ENCODE measurements at regions of chr10 and their contacts with region 1.

Region 1: DNA sequence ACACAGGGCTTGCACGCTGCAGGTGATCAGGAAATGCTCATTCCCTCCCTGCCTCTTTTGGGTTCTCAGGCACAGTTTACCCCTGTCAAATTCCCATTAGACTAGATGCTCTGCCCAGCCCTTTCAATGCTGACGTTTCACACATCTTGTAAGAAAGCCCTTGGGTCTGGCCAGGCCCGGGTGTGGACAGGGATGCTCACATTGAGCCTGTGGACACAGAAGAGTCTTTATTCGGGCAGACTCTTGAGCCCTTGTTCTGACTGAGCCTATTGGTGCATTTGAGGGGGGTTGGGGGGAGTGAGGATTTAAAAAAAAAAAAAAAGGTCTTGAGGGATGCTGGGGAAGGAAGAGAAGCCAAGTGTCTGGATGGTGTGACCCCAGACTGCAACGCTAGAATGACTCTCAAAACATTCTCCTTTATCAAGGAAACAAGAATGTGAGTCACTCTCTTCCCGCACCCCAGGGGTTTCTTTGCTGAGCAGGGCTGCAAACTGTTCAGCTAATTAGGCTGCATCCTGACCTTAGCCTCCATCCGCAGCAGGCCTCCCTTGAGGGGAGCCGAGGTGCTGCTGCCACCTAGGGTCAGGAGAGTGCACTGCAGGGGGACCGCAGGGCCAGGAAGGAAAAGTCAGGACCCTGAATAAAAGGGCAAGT is 53.6 kb upstream of the TMEM72 start:
- DNase-seq: peak in 1 of 2 donors; percentile 63
- ATAC-seq: peak; percentile 75

Region 2: DNA sequence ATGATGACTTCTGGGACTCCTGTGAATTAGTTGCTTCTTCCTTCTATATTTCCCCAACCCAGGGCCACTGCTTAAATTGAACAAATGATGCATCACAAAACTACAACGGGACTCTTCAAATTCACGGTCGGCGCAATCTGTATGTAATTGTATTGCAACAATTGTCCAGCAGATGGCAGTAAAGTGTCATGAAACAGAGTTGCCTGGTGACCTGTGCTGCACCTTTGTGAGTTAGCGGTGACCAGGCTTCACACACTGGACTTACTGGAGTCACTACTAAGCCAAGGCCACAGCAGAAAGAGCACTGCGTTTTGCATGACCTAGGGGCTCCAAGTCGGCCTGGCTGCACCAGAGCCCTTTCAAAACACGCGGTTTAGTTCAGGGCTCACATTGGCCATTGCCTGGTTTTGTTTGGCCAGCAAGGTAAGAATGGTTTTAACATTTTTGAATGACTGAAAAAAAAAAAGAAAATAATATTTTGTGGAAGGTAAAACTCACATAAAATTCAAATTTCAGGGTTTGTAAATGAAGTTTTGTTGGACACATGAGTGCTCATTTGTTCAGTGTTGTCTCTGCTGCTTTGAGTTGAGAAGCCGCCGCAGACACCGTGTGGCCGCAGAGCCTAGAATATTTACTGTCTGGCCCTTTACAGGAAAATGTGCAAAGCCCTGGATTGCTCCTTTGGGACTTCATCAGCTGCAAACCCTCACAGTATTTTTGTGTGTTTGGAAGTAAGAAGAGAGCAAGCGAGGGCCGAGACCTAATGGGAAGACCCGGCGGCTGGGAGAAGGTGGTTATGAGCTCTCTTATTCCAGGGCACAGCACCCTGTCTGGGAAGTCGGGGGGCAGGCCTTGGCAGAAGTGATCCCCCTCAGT is 1185.6 kb before region 1 on chr10:
- intact Hi-C with region 1: loop called in 1 of 2 experiments (anchors 5 kb)
- DNase-seq: peak in 1 of 2 donors; percentile 39
- ATAC-seq: peak; percentile 78

Region 3: GRCh38 chr10:44310762-44311562 is 546.5 kb before region 1 on chr10:
- intact Hi-C with region 1: loop called in 1 of 2 experiments (anchors 10 kb)
- DNase-seq: peak; percentile 73 to 83
- ATAC-seq: peak; percentile 99

Region 4: DNA sequence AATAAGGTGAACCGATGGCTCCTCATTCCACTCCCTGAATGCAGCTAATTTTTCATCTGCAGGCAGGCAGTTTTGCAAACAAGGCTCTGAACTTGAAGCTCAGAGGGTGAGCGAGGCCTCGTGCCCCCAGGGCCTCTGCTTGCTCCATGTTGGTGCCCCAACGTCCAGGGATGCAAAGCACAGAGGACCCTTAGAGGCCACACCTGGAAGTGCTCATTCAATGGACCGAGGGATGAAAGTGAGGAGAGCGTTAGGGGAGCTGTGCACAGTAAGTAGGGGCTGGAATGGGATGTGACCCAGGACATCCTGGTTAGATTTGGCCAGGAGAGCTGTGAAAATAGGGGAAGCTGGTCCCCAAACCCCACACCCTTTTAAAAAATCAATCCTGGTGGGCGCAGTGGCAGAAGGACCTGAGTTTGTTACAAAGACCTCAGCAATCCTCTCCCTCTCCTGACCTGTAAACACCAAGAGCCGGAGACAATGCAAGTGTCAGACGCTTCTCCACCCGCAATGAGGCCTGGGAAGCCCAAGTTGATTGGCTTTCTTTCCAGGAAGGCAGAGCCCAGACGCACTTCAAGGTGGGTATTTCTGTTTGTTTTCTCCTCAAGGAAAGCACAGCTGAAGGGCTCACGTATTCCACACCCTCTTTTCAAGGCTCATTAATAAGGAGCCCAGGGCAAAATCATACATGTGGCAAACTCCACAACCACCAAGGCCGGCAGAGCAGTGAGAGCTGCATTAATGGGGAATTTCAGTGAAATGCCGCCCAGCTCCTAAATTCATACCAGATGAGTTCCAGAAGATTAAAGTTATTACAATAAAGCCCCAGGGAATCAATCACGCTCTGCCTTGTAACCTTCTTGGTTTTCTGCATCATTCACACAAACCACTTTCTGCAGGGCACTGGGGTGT is 458.5 kb before region 1 on chr10:
- intact Hi-C with region 1: loop called in 1 of 2 experiments (anchors 10 kb)
- DNase-seq: peak in 1 of 2 donors; percentile 7
- ATAC-seq: no peak

Region 5: DNA sequence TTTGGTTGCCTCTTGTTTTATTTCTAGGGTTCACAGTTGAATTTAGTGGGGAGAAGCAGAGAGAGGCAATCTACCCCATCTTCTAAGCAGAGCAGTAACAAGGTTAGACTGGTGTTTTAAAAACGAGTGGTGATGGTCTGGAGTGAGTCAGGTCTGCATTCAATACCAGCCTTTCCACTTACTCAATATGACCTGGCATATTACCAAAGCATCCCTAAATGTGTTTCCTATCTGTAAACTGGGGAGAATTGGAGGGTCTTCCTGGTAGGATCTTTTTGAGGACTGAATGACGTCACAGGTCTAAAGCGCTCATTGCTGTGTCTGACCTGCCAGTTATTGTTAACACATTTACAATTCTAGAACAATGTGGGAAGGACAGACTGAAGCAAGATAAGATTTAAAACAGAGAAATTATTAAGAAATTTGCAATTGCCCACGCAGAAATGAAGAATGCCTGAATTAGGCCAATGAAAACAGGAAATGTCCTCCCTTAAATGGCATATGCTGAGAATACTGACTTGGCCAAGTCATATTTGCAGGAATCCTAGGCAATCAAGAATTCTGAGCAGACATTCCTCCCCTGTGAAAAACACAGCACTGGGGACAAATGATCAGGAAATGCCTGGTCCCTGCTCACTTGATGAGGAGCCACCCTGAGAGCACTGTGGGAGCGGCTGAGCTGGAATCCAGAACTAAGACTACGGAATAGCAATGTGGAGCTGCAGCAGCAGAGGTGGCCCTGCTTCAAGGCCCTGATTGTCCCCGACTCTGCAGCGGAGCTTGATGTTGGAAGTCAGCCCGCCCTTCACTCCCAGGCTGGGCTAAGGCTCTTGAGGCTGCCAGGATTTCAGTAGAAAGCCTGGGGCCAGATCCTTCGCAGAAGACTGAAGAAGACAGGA is 288.0 kb before region 1 on chr10:
- intact Hi-C with region 1: no loop called
- DNase-seq: no peak
- ATAC-seq: no peak

Measured in left colon (tissue), 2 donors.